ENCODE measurements at regions of chr10 and their contacts with region 1.

Region 1: DNA sequence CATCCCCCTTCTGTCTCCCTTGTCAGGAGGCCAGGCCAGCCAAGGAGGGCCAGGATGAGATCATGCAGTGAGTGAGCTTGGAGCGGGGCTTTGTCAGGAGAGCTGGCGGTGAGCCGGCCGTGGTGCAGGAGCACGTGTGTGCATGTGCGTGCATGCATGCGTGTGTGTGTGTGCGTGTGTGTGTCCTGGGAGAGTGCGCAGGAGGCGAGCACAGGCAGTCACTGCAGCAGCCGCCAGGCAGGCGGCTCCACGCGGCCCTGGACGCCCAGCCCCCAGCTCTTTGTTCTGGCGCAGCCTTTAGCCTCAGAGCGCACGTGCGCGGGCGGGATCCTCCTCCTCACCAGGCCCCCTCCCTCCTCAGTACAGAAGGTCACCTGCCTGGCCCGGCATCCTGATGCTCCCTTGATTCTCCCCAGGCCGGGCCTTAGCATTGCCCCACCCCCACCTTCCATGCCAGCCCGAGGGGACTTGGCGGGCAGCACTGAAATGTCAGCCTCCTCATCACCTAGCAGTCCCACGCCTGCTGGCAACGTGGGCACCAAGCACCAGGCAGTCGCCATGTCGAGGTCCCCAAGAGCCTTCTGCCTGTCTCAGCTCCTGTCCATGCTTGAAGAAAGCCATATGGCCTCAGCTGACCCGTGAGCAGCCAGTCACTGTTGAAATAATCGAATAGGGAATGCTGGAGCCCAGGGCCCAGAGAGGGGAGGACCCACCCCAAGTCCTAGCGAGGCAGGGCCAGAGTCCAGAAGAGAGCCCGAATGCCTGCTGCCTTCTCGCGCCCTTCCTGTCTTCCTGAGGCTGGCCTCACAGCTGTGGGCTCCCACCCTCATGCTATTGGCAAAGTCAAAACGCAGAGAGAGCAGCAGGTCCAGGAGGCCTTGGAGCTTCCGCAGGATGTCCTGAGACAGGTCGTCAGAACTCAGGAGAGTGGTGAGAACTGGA is 125.9 kb upstream of the PPIF start:
- DNase-seq: peak; percentile 91
- ATAC-seq: peak; percentile 73

Region 2: GRCh38 chr10:79249186-79250121 is 28.1 kb after region 1 on chr10:
- intact Hi-C with region 1: loop called (anchors 1 kb)
- DNase-seq: no peak
- ATAC-seq: no peak

Region 3: DNA sequence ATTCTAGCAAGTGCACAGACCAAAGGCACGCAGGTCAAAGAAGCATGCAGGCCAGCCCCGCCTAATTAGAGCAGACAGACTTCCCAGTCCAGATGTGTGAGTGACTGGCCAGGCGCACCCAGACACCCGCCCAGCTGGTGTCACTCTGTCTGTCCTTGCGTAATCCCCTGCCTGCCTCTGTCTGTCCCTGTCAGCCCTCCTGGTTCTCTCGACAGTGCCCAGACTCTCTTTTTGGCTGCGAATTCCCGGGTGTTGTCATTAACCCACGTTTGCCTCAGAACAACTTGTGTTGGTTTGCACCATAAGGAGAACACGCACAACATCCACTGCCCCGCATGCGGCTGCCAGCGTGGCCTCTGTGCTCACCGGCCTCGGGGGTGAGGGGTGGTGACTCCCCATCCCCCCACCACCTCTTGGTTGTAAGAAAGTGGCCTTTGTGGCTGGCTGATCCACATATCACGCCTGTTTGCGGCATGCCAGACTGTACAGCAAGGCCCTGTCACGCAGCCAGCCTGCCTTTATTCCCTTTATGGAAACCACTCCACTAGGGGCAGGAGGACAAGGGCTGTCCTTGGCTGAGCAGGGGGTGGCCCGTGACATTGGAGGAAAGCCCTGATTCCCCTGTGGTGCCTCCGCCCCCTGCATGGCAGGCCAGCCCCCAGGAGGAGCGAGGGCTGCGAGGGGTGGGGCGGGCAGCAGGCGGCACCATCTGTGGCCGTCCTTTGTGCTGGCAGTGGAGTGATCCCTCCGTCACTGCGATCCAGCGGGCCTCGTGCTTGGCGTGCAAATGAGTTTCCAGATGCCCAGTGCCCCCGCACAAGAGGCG is 53.1 kb after region 1 on chr10:
- intact Hi-C with region 1: loop called (anchors 2 kb)
- DNase-seq: peak; percentile 92
- ATAC-seq: peak; percentile 88